Heart left ventricle (tissue), 16 donors: ENCODE measurements at regions of chr2 and their contacts with region 1.

Region 1: GRCh38 chr2:54206596-54206995 is 49.4 kb downstream of the TSPYL6 start:
- DNase-seq: no peak
- ATAC-seq: peak in 2 of 4 donors; percentile 49
- H3K4me3 ChIP-seq: no peak overlapping the region
- H3K27ac ChIP-seq: no peak overlapping the region
- H3K4me1 ChIP-seq: peaks cover 0 to 38% (median 25%) of the 10 kb centered on the region in 12 donors
- H3K27me3 ChIP-seq: no peaks in the 10 kb centered on the region
- CTCF ChIP-seq: peak; percentile 47 to 81 (median 68)
- POLR2A ChIP-seq: no peak

Region 2: DNA sequence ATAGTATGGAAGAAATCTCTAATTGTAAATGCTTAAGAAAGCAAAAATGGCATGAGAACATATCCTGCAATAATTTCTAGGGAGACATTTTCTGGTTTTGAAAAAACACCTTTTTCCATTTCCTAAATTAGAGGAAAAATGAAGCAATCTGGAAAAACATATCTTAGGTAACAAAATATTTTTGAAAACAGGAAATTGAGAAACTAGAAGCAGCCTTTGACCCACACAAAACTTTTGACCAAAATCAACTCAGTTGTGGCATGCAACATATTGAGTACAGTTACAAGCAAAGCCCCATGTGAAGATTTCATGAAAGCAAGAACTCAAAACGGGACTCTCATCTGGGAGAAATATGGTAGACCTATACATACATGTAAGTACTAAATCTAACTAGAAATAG is 467.6 kb before region 1 on chr2:
- intact Hi-C with region 1: no loop called
- DNase-seq: no peak
- ATAC-seq: no peak
- H3K4me3 ChIP-seq: no peak overlapping the region
- H3K27ac ChIP-seq: no peak overlapping the region
- H3K4me1 ChIP-seq: peaks cover 0 to 12% (median 0%) of the 10 kb centered on the region in 12 donors
- H3K27me3 ChIP-seq: no peaks in the 10 kb centered on the region
- CTCF ChIP-seq: no peak
- POLR2A ChIP-seq: no peak

Region 3: GRCh38 chr2:53767405-53768241 is 439.0 kb before region 1 on chr2 and contains the start of gene CHAC2:
- intact Hi-C with region 1: no loop called
- DNase-seq: peak; percentile 84 to 93 (median 89)
- ATAC-seq: peak; percentile 89 to 97 (median 96)
- H3K4me3 ChIP-seq: peak within 1 kb of the TSS; percentile 58 to 91 (median 77)
- H3K27ac ChIP-seq: peak within 1 kb of the TSS in 11 of 12 donors; percentile 54 to 91 (median 83)
- H3K4me1 ChIP-seq: peaks cover 0 to 18% (median 7%) of the 10 kb centered on the region in 12 donors
- H3K27me3 ChIP-seq: no peaks in the 10 kb centered on the region
- CTCF ChIP-seq: peak; percentile 16 to 64 (median 46)
- POLR2A ChIP-seq: peak in 1 of 2 donors; percentile 42
- total RNA-seq, gene CHAC2: 1.4 to 6.0 (median 2.9) TPM

Region 4: GRCh38 chr2:54166121-54166773 is 40.3 kb before region 1 on chr2:
- intact Hi-C with region 1: no loop called
- DNase-seq: no peak
- ATAC-seq: no peak
- H3K4me3 ChIP-seq: no peak overlapping the region
- H3K27ac ChIP-seq: no peak overlapping the region
- H3K4me1 ChIP-seq: peaks cover 0 to 7% (median 0%) of the 10 kb centered on the region in 12 donors
- H3K27me3 ChIP-seq: no peaks in the 10 kb centered on the region
- CTCF ChIP-seq: no peak
- POLR2A ChIP-seq: no peak

Region 5: GRCh38 chr2:54254180-54254579 is 47.6 kb after region 1 on chr2:
- intact Hi-C with region 1: no loop called
- DNase-seq: no peak
- ATAC-seq: no peak
- H3K4me3 ChIP-seq: no peak overlapping the region
- H3K27ac ChIP-seq: no peak overlapping the region
- H3K4me1 ChIP-seq: peaks cover 0 to 5% (median 0%) of the 10 kb centered on the region in 12 donors
- H3K27me3 ChIP-seq: no peaks in the 10 kb centered on the region
- CTCF ChIP-seq: no peak
- POLR2A ChIP-seq: no peak

Region 6: GRCh38 chr2:54267577-54267976 is 61.0 kb after region 1 on chr2:
- intact Hi-C with region 1: loop called in 1 of 10 experiments (anchors 2 kb)
- DNase-seq: no peak
- ATAC-seq: no peak
- H3K4me3 ChIP-seq: no peak overlapping the region
- H3K27ac ChIP-seq: peak overlapping the region in 1 of 12 donors; percentile 22
- H3K4me1 ChIP-seq: peaks cover 0 to 8% (median 0%) of the 10 kb centered on the region in 12 donors
- H3K27me3 ChIP-seq: no peaks in the 10 kb centered on the region
- CTCF ChIP-seq: no peak
- POLR2A ChIP-seq: no peak

Region 7: GRCh38 chr2:54360055-54360792 is 153.6 kb after region 1 on chr2:
- intact Hi-C with region 1: loop called in 1 of 10 experiments (anchors 2 kb)
- DNase-seq: peak in 4 of 5 donors; percentile 66 to 73 (median 68)
- ATAC-seq: peak; percentile 91 to 97 (median 95)
- H3K4me3 ChIP-seq: peak overlapping the region in 8 of 12 donors; percentile 12 to 32 (median 20)
- H3K27ac ChIP-seq: peak overlapping the region; percentile 57 to 83 (median 75)
- H3K4me1 ChIP-seq: peaks cover 0 to 32% (median 20%) of the 10 kb centered on the region in 12 donors
- H3K27me3 ChIP-seq: no peaks in the 10 kb centered on the region
- CTCF ChIP-seq: no peak
- POLR2A ChIP-seq: no peak

Region 8: DNA sequence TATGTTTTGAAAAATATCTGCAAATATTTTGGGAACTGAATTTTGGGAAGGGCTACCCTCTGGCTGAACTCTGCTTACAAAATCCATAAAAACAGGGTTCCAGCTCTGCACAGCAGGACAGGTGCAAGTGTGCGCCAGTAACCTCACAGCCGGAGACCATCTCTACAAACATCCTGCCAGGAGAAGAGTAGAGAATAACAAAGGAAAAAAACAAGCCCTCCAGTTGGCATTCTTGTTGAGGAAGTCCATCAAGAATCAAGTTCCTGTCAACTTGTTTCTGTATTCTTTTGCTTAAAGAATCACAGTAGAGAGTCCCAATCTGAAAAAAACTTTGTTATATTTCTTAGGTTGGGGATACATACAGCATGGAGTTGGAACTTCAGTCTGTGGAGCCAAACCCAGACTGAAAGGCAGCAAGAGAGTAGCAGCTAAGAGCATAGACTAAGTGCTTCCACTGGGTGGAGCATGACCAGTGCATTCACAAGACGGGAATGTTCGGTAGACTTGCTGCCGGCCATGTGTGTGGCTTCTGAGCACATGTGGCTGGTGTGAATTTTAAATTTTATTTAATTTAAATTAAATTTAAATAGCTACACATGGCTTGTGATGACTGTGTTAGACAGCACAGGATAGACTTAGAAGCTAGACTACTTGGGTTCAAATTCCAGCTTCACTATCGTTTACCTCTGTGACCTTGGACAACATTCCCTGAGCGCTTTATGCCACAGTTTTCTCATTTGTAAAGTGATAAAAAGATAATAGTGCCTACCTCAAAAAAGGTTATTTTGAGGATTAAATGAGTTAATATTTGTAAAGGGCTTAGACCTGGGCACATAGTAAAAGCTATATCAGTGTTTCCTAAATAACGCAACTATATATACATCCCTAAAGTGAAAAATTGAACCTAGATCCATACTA is 291.4 kb after region 1 on chr2:
- intact Hi-C with region 1: loop called in 4 of 10 experiments (anchors 5 to 10 kb)
- DNase-seq: peak in 3 of 5 donors; percentile 50 to 64 (median 52)
- ATAC-seq: peak in 3 of 4 donors; percentile 59 to 73 (median 70)
- H3K4me3 ChIP-seq: no peak overlapping the region
- H3K27ac ChIP-seq: peak overlapping the region in 11 of 12 donors; percentile 2 to 61 (median 53)
- H3K4me1 ChIP-seq: peaks cover 34 to 100% (median 83%) of the 10 kb centered on the region in 12 donors
- H3K27me3 ChIP-seq: no peaks in the 10 kb centered on the region
- CTCF ChIP-seq: peak; percentile 20 to 67 (median 46)
- POLR2A ChIP-seq: no peak

Region 9: GRCh38 chr2:54522624-54523281 is 316.2 kb after region 1 on chr2:
- intact Hi-C with region 1: loop called in 2 of 10 experiments (anchors 10 kb)
- DNase-seq: peak in 2 of 5 donors; percentile 45
- ATAC-seq: peak in 2 of 4 donors; percentile 37 to 47
- H3K4me3 ChIP-seq: no peak overlapping the region
- H3K27ac ChIP-seq: peak overlapping the region in 5 of 12 donors; percentile 6 to 82 (median 59)
- H3K4me1 ChIP-seq: peaks cover 8 to 94% (median 87%) of the 10 kb centered on the region in 12 donors
- H3K27me3 ChIP-seq: no peaks in the 10 kb centered on the region
- CTCF ChIP-seq: peak; percentile 42 to 68 (median 59)
- POLR2A ChIP-seq: no peak